Caco-2 (cell line): ENCODE measurements at regions of chr3 and their contacts with region 1.

Region 1: GRCh38 chr3:15309662-15310335 is 22.6 kb downstream of the SH3BP5 start:
- DNase-seq: no peak
- H3K4me3 ChIP-seq: no peak overlapping the region
- H3K4me3 Mint-ChIP-seq: peak overlapping the region; percentile 45
- H3K27ac Mint-ChIP-seq: peak overlapping the region; percentile 92
- H3K4me1 ChIP-seq: peaks cover 80% of the 10 kb centered on the region
- H3K4me1 Mint-ChIP-seq: peaks cover 39% of the 10 kb centered on the region
- H3K27me3 ChIP-seq: no peaks in the 10 kb centered on the region
- H3K27me3 Mint-ChIP-seq: no peaks in the 10 kb centered on the region
- CTCF ChIP-seq: no peak

Region 2: GRCh38 chr3:15223685-15224572 is 85.9 kb before region 1 on chr3:
- CTCF ChIA-PET with region 1: no interaction called
- POLR2A ChIA-PET with region 1: no interaction called
- intact Hi-C with region 1: no loop called
- DNase-seq: no peak
- H3K4me3 ChIP-seq: no peak overlapping the region
- H3K4me3 Mint-ChIP-seq: no peak overlapping the region
- H3K27ac Mint-ChIP-seq: no peak overlapping the region
- H3K4me1 ChIP-seq: no peaks in the 10 kb centered on the region
- H3K4me1 Mint-ChIP-seq: no peaks in the 10 kb centered on the region
- H3K27me3 ChIP-seq: no peaks in the 10 kb centered on the region
- H3K27me3 Mint-ChIP-seq: no peaks in the 10 kb centered on the region
- CTCF ChIP-seq: no peak

Region 3: DNA sequence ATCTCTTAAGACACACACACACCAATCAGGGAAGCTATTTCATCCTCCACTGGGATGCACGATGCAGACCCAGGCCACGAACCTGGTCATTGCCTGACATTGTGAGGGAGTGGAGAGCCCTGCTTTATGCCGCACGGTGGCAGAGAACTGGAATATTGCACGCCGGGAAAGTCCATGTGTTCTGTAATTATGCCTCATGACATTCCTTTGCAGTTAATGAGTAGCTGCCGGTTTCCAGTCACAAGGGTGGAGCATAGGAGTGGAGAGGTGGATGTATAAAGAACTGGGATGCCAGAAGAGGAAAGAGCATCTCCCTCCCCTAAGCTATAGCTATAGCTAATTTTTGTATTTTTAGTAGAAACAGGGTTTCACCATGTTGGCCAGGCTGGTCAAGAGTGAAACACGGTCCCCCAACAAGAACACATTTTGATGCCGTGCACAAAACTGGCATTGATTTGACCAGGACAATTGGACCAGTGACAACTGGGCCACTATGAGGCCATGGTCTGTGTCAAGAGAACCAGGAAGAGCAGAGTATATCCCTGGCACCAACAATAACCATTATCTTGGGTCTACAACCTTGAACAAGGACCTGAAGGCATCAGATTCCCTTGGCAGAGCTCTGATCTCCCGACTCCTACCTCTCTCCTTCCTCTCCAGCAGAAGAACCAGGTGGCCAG is 28.8 kb before region 1 on chr3:
- CTCF ChIA-PET with region 1: no interaction called
- POLR2A ChIA-PET with region 1: no interaction called
- intact Hi-C with region 1: loop called (anchors 1 kb)
- DNase-seq: peak; percentile 30 to 52
- H3K4me3 ChIP-seq: no peak overlapping the region
- H3K4me3 Mint-ChIP-seq: no peak overlapping the region
- H3K27ac Mint-ChIP-seq: peak overlapping the region; percentile 61
- H3K4me1 ChIP-seq: peaks cover 13% of the 10 kb centered on the region
- H3K4me1 Mint-ChIP-seq: peaks cover 24% of the 10 kb centered on the region
- H3K27me3 ChIP-seq: no peaks in the 10 kb centered on the region
- H3K27me3 Mint-ChIP-seq: no peaks in the 10 kb centered on the region
- CTCF ChIP-seq: no peak

Region 4: DNA sequence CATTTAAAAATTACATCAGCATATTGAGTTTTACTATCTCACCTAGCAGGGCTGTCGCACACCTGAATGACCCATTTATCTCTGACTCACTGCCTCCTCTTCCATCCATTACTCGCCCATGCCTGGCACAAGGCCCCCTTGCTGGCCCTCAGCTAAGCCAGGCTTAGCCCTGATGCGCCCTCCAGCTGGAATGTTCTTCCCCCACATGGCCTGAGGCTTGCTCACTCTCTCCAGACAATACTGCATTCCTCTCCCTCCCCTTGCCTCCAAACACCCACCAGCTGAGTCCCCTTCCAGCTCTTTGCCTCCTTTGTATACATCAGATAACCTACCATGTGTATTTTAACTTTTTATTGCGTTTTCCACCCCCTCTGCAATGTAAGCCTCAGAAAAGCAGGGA is 15.4 kb after region 1 on chr3:
- CTCF ChIA-PET with region 1: interaction called, 4 read pairs
- POLR2A ChIA-PET with region 1: interaction called, 3 read pairs
- intact Hi-C with region 1: loop called (anchors 1 kb)
- DNase-seq: peak; percentile 69 to 76
- H3K4me3 ChIP-seq: no peak overlapping the region
- H3K4me3 Mint-ChIP-seq: peak overlapping the region; percentile 21
- H3K27ac Mint-ChIP-seq: peak overlapping the region; percentile 79
- H3K4me1 ChIP-seq: peaks cover 35% of the 10 kb centered on the region
- H3K4me1 Mint-ChIP-seq: peaks cover 23% of the 10 kb centered on the region
- H3K27me3 ChIP-seq: no peaks in the 10 kb centered on the region
- H3K27me3 Mint-ChIP-seq: no peaks in the 10 kb centered on the region
- CTCF ChIP-seq: no peak

Region 5: DNA sequence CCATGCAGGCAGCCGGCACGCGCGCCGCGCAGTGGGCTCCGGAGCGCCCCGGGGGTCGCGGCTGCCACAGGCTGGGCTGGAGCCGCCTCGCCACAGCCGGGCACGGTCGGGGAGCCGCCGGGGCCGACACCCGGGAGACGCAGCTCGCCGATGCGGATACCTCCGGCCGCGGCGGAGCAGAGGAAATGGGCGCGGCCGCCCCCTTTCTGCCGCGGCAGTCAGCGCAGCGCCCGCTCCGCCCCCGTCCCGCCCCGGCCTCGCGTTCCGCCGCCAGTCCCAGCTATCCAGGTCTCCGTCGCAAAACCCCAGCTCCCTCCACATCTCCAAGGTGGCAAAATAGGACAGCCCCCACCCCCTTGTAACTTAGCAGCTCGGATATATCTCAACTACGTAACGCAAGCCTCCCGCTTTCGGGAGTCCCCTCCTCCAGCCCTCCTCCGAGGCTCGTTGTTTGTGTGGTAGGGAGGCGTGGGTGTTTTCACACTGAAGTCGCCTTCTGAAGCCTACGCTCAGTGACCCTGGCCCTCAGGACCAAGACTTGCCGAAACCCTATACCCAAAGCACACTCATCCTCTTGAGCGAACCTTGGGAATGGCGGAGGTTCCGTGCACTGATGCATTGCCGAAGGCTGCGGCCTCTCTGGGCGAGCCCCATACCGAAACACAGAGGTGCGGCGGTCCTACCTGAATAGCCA is 22.8 kb after region 1 on chr3 and contains the start of gene SH3BP5:
- CTCF ChIA-PET with region 1: interaction called, 4 read pairs
- POLR2A ChIA-PET with region 1: interaction called, 6 read pairs
- intact Hi-C with region 1: loop called (anchors 2 kb)
- DNase-seq: peak; percentile 64 to 83
- H3K4me3 ChIP-seq: peak within 1 kb of the TSS; percentile 93
- H3K4me3 Mint-ChIP-seq: peak within 1 kb of the TSS; percentile 91
- H3K27ac Mint-ChIP-seq: peak within 1 kb of the TSS; percentile 82
- H3K4me1 ChIP-seq: peaks cover 16% of the 10 kb centered on the region
- H3K4me1 Mint-ChIP-seq: peaks cover 3% of the 10 kb centered on the region
- H3K27me3 ChIP-seq: no peaks in the 10 kb centered on the region
- H3K27me3 Mint-ChIP-seq: no peaks in the 10 kb centered on the region
- CTCF ChIP-seq: peak; percentile 49 to 62
- total RNA-seq, gene SH3BP5: 20.8 and 26.1 TPM in 2 replicates

Region 6: GRCh38 chr3:15377961-15378791 is 68.4 kb after region 1 on chr3:
- CTCF ChIA-PET with region 1: no interaction called
- POLR2A ChIA-PET with region 1: no interaction called
- intact Hi-C with region 1: loop called (anchors 2 kb)
- DNase-seq: peak; percentile 92 to 93
- H3K4me3 ChIP-seq: no peak overlapping the region
- H3K4me3 Mint-ChIP-seq: peak overlapping the region; percentile 19
- H3K27ac Mint-ChIP-seq: peak overlapping the region; percentile 57
- H3K4me1 ChIP-seq: 0 out of 2 replicates have a peak, but pooled peaks cover 5% of the 10 kb centered on the region
- H3K4me1 Mint-ChIP-seq: peaks cover 6% of the 10 kb centered on the region
- H3K27me3 ChIP-seq: no peaks in the 10 kb centered on the region
- H3K27me3 Mint-ChIP-seq: no peaks in the 10 kb centered on the region
- CTCF ChIP-seq: peak; percentile 76 to 81